ENCODE measurements at regions of chr6 and their contacts with region 1.

Region 1: GRCh38 chr6:85065831-85066230 is 301.4 kb upstream of the TBX18 start:
- DNase-seq: no peak
- ATAC-seq: no peak
- H3K4me3 ChIP-seq: no peak overlapping the region
- H3K27ac ChIP-seq: no peak overlapping the region
- H3K4me1 ChIP-seq: no peaks in the 10 kb centered on the region
- H3K27me3 ChIP-seq: no peaks in the 10 kb centered on the region
- CTCF ChIP-seq: no peak
- POLR2A ChIP-seq: no peak
- RAD21 ChIP-seq: no peak

Region 2: DNA sequence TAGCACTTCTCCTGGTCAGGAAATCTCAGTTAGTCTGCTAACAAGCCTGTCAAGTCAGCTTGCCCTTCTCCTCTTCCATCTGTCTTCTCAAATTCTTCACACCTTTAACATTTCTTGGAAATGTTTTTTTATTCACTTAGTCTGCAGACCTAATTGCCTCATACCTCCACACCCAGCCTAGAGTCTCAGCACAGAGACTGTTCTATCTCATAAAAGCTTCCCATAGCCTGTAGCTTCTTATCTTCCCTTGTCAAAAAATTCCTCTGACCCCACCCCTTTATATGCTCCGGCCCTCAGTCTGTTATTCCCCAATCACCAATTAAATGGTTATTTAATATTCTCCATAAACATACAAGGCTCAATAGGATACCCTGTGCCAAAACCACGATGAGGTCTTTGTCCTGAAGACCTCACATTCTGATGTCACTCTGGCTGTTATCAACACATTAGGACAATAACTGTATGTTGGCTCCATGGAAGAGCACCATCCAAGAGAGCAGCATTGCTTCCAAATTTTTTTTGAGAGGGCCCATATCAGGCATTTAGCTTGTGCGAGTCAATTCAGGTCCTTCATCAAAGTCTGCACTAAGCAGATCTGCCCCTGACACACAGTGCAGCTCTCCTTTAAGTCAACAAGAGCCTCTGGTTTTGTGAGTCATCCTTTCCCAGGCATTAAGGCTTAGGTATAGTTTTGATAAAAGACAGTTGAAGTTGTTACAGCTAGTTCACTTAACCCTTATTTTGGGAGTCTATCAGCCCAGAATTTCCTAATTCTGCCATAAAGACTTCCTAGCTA is 218.3 kb before region 1 on chr6:
- CTCF ChIA-PET with region 1: no interaction called
- POLR2A ChIA-PET with region 1: no interaction called
- dilution Hi-C with region 1: no loop called
- in situ Hi-C with region 1: no loop called
- intact Hi-C with region 1: loop called (anchors 10 kb)
- DNase-seq: no peak
- ATAC-seq: no peak
- H3K4me3 ChIP-seq: no peak overlapping the region
- H3K27ac ChIP-seq: no peak overlapping the region
- H3K4me1 ChIP-seq: no peaks in the 10 kb centered on the region
- H3K27me3 ChIP-seq: no peaks in the 10 kb centered on the region
- CTCF ChIP-seq: no peak
- POLR2A ChIP-seq: no peak
- RAD21 ChIP-seq: no peak

Measured in IMR-90 (cell line).